ENCODE measurements at regions of chr12 and their contacts with region 1.

Region 1: GRCh38 chr12:114447274-114447716 is 41.4 kb upstream of the TBX5 start:
- DNase-seq: no peak
- H3K4me3 ChIP-seq: no peak overlapping the region
- H3K27ac ChIP-seq: no peak overlapping the region
- H3K4me1 ChIP-seq: no peaks in the 10 kb centered on the region
- H3K27me3 ChIP-seq: peaks cover 33% of the 10 kb centered on the region
- CTCF ChIP-seq: no peak

Region 2: GRCh38 chr12:114414031-114414865 is 33.0 kb before region 1 on chr12:
- CTCF ChIA-PET with region 1: no interaction called
- dilution Hi-C with region 1: no loop called
- in situ Hi-C with region 1: no loop called
- intact Hi-C with region 1: no loop called
- DNase-seq: no peak
- H3K4me3 ChIP-seq: no peak overlapping the region
- H3K27ac ChIP-seq: no peak overlapping the region
- H3K4me1 ChIP-seq: no peaks in the 10 kb centered on the region
- H3K27me3 ChIP-seq: peaks cover 25% of the 10 kb centered on the region
- CTCF ChIP-seq: no peak

Region 3: DNA sequence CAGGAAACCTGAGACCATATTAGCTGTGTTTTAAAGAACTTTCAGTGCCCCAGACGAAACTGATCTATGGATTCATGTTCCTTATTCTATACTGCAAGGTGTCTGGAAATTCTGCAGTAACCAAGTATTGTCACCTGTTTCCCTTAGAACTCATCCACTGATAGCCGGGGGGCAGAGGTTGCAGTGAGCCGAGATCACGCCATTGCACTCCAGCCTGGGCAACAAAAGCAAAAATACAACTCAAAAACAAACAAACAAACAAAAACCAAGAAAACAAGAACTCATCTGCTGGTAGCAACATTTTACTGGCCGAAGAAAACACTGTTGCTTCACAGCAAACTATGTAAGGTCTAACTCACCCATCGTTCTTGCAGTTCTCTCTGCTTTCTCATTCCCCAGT is 72.9 kb after region 1 on chr12:
- CTCF ChIA-PET with region 1: no interaction called
- dilution Hi-C with region 1: loop called (anchors 5 kb)
- in situ Hi-C with region 1: no loop called
- intact Hi-C with region 1: no loop called
- DNase-seq: no peak
- H3K4me3 ChIP-seq: no peak overlapping the region
- H3K27ac ChIP-seq: no peak overlapping the region
- H3K4me1 ChIP-seq: no peaks in the 10 kb centered on the region
- H3K27me3 ChIP-seq: no peaks in the 10 kb centered on the region
- CTCF ChIP-seq: no peak

Measured in mammary epithelial cell (primary cell).